Activated CD4-positive, alpha-beta memory T cell treated with anti-CD3 and anti-CD28 coated beads, Interleukin-2, amount 10 ng/mL, durations not matched to agents 7 days and 5 days (primary cell): ENCODE measurements at regions of chr6 and their contacts with region 1.

Region 1: GRCh38 chr6:111793711-111794111 is 79.5 kb downstream of the FYN start:
- DNase-seq: peak; percentile 68
- H3K4me3 Mint-ChIP-seq: peak overlapping the region; percentile 73
- H3K27ac Mint-ChIP-seq: peak overlapping the region; percentile 87
- H3K4me1 Mint-ChIP-seq: peaks cover 65% of the 10 kb centered on the region
- H3K27me3 Mint-ChIP-seq: no peaks in the 10 kb centered on the region

Region 2: GRCh38 chr6:111777357-111777756 is 16.4 kb before region 1 on chr6:
- CTCF ChIA-PET with region 1: interaction called, 7 read pairs
- POLR2A ChIA-PET with region 1: interaction called, 20 read pairs
- DNase-seq: no peak
- H3K4me3 Mint-ChIP-seq: no peak overlapping the region
- H3K27ac Mint-ChIP-seq: peak overlapping the region; percentile 66
- H3K4me1 Mint-ChIP-seq: peaks cover 86% of the 10 kb centered on the region
- H3K27me3 Mint-ChIP-seq: no peaks in the 10 kb centered on the region

Region 3: GRCh38 chr6:111812060-111813038 is 18.6 kb after region 1 on chr6:
- CTCF ChIA-PET with region 1: no interaction called
- POLR2A ChIA-PET with region 1: no interaction called
- DNase-seq: no peak
- H3K4me3 Mint-ChIP-seq: no peak overlapping the region
- H3K27ac Mint-ChIP-seq: peak overlapping the region; percentile 72
- H3K4me1 Mint-ChIP-seq: peaks cover 68% of the 10 kb centered on the region
- H3K27me3 Mint-ChIP-seq: no peaks in the 10 kb centered on the region